ENCODE measurements at regions of chr9 and their contacts with region 1.

Region 1: DNA sequence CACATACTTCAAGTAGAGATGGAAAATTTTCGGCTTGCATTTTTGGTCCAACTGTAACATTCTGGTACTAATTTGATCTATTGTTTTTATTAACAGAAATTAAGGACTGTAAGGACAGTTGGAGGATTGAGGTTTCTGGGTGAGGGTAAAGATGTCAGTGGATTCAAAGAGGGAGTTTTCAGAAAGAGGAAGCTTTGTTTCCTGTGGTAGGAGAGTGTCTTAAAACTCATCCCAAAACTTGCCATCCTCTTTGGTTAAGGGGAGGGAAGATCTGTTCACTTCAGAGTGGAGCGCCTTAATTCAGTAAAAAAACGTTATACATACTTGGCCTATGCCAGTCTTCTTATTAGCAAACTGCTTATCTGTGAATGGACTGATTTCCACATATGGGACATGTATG is 13.8 kb downstream of the CNTRL start:
- DNase-seq: no peak
- ATAC-seq: no peak

Region 2: GRCh38 chr9:121034529-121034928 is 54.0 kb before region 1 on chr9:
- intact Hi-C with region 1: no loop called
- DNase-seq: no peak
- ATAC-seq: no peak

Region 3: GRCh38 chr9:121115466-121115865 is 26.9 kb after region 1 on chr9:
- intact Hi-C with region 1: loop called (anchors 2 kb)
- DNase-seq: no peak
- ATAC-seq: no peak